Activated CD8-positive, alpha-beta T cell treated with anti-CD3 and anti-CD28 coated beads for 36 hours (primary cell): ENCODE measurements at regions of chr11 and their contacts with region 1.

Region 1: DNA sequence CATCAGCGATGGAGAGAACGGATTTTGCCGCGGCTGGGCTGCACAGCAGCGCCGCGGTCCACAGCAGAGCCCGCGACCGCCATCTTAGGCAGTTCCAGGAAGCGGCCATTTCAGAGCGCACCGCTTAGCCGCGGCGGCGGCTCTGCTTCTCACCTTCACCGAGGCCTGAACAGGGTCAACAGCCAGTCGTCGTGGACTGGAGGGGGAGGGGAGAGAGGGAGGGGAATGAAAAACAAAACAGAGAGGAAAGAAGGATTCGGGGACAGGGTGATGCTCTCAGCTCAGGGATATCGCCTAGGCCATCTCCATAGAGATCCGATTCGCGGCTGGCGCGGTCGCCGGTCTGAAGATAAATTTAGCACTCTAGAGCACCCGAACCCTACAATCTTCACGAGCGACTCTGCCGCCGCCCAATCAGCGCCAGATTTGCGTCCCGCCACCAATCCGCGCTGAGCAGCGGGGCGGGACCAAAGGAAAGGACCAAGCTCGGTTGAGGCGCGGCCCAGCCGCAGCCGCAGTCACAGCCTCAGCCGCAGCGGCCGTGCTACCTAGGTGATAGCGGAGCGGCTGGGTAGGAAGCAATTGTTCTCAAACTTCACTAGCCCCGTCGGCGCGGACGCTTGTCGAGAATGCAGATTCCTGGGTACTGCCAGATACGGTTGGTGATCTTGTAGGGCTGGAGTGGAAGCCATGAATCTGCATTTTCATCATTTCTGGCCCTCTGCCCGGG is at the start of gene ZBED5:
- DNase-seq: peak; percentile 97
- ATAC-seq: peak; percentile 94
- H3K4me3 Mint-ChIP-seq: peak within 1 kb of the TSS; percentile 97
- H3K27ac Mint-ChIP-seq: peak within 1 kb of the TSS; percentile 98
- H3K4me1 Mint-ChIP-seq: peaks cover 38% of the 10 kb centered on the region
- H3K27me3 Mint-ChIP-seq: no peaks in the 10 kb centered on the region
- CTCF ChIP-seq: no peak
- total RNA-seq, gene ZBED5: 35.7 to 36.7 TPM

Region 2: GRCh38 chr11:10803676-10804075 is 54.2 kb before region 1 on chr11:
- CTCF ChIA-PET with region 1: interaction called, 15 read pairs
- POLR2A ChIA-PET with region 1: interaction called, 134 read pairs
- intact Hi-C with region 1: loop called (anchors 2 kb)
- DNase-seq: no peak
- ATAC-seq: no peak
- H3K4me3 Mint-ChIP-seq: no peak overlapping the region
- H3K27ac Mint-ChIP-seq: peak overlapping the region; percentile 60
- H3K4me1 Mint-ChIP-seq: peaks cover 75% of the 10 kb centered on the region
- H3K27me3 Mint-ChIP-seq: no peaks in the 10 kb centered on the region
- CTCF ChIP-seq: no peak

Region 3: DNA sequence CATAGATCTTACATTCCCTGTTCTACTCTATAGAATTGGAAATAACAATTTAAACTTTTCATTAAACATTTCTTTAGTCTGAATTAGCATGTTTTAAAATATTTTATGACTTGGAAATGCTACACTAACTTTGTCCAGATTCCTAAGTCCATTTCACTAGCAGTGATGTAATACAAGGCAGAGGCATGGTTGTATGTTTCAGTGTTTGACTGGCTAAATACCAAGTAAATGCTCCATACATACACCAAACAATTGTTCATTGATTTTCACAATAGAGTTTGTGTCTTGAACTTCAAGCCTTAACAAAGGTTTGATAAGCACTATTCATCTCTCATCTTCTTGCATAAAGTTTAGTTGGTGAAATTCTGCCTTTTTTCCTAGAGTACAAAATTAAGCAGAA is 13.5 kb before region 1 on chr11:
- CTCF ChIA-PET with region 1: no interaction called
- POLR2A ChIA-PET with region 1: interaction called, 27 read pairs
- intact Hi-C with region 1: no loop called
- DNase-seq: no peak
- ATAC-seq: no peak
- H3K4me3 Mint-ChIP-seq: no peak overlapping the region
- H3K27ac Mint-ChIP-seq: no peak overlapping the region
- H3K4me1 Mint-ChIP-seq: peaks cover 17% of the 10 kb centered on the region
- H3K27me3 Mint-ChIP-seq: no peaks in the 10 kb centered on the region
- CTCF ChIP-seq: no peak